Activated CD4-positive, alpha-beta T cell treated with anti-CD3 and anti-CD28 coated beads, Interleukin-2, amount 10 ng/mL, durations not matched to agents 7 days and 5 days (primary cell): ENCODE measurements at regions of chr10 and their contacts with region 1.

Region 1: DNA sequence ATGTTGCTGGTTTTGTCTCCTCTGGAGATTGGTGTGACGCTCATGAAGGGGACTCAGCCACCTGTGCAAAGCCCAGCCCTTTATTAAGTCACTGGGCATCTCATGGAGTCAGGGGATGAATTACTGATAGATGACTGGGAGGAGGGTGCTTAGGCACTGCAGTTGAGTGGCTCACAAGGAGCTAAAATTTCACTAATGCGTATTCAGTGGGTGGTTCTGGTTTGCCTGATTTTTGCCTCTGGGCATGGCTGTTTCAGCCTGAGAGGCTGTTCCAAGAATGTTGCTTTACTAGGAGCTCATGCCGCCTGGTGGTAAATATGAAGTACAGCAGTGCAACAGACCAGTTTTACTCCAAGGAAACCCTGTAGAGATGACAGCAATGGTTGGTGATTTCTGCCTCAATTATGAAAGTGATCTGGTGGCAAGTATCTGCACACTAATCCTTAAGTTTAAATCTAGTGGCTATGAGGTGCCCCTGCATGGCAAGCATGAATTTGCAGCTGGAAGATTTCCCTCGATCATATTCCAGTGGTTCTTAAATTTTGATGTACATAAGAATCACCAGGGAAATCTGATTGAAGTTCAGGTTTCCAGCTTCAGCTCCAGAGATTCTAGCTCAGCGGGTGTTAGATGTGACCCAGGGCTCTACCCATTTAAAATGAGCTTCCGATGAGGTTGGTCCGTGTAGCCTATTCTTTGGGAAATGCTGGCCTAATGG is 19.9 kb downstream of the ACTA2 start:
- DNase-seq: peak; percentile 55
- H3K4me3 Mint-ChIP-seq: no peak overlapping the region
- H3K27ac Mint-ChIP-seq: no peak overlapping the region
- H3K4me1 Mint-ChIP-seq: peaks cover 25% of the 10 kb centered on the region
- H3K27me3 Mint-ChIP-seq: no peaks in the 10 kb centered on the region

Region 2: DNA sequence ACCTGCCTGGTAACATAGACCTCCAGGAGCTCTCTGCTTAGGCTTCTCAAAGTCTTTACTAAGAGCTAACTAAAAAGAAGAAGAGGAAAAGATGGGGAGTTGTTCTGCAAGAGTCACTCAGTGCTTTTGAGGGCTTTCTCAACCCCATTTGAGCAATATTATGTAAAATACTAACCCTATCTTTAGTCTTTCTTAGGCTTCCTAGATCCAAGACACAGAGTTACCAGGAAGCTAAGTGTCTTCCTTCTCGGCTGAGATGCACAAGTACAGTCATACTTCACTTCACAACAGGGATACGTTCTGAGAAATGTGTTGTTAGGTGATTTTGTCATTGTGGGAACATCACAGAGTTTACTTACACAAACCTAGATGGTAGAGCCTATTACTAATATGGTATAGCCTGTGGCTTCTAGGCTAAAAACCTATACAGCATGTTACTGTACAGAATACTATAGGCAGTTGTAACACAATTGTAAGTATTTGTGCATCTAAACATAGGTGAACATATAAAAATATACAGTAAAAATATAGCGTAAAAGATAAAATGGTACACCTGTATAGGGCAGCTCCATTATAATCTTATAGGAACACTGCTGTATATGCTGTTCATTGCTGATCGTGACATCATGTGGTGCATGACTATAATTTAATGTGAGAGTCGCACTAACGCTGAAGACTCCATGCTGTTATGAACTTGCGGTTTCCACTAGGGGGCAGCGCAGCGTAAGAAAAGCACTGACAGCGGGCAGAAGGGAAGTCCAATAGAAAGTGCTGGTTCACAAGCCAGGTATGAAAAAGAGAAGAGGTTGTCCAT is 97.4 kb before region 1 on chr10:
- CTCF ChIA-PET with region 1: interaction called, 57 read pairs
- POLR2A ChIA-PET with region 1: no interaction called
- DNase-seq: peak; percentile 92
- H3K4me3 Mint-ChIP-seq: no peak overlapping the region
- H3K27ac Mint-ChIP-seq: no peak overlapping the region
- H3K4me1 Mint-ChIP-seq: peaks cover 32% of the 10 kb centered on the region
- H3K27me3 Mint-ChIP-seq: no peaks in the 10 kb centered on the region

Region 3: DNA sequence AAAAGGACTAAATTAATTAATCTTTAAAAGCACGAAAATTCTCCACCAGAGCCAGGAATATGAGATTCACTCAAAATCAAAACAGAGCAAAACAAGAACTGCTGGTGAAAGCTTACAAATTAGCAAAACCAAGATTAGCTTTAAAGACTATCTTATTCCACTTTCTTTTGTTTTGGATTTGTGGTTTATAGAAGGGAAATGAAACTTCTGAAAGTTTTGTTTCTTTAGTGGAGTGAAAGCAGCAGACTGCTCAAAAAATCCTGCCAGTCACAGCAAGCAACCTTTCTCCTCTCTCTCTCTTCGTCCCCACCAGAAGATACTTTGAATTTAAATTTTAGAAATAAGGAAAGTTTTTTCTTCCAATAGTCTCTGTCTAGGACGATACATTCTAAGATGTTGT is 12.1 kb after region 1 on chr10:
- CTCF ChIA-PET with region 1: interaction called, 32 read pairs
- POLR2A ChIA-PET with region 1: no interaction called
- DNase-seq: no peak
- H3K4me3 Mint-ChIP-seq: no peak overlapping the region
- H3K27ac Mint-ChIP-seq: no peak overlapping the region
- H3K4me1 Mint-ChIP-seq: peaks cover 17% of the 10 kb centered on the region
- H3K27me3 Mint-ChIP-seq: no peaks in the 10 kb centered on the region

Region 4: DNA sequence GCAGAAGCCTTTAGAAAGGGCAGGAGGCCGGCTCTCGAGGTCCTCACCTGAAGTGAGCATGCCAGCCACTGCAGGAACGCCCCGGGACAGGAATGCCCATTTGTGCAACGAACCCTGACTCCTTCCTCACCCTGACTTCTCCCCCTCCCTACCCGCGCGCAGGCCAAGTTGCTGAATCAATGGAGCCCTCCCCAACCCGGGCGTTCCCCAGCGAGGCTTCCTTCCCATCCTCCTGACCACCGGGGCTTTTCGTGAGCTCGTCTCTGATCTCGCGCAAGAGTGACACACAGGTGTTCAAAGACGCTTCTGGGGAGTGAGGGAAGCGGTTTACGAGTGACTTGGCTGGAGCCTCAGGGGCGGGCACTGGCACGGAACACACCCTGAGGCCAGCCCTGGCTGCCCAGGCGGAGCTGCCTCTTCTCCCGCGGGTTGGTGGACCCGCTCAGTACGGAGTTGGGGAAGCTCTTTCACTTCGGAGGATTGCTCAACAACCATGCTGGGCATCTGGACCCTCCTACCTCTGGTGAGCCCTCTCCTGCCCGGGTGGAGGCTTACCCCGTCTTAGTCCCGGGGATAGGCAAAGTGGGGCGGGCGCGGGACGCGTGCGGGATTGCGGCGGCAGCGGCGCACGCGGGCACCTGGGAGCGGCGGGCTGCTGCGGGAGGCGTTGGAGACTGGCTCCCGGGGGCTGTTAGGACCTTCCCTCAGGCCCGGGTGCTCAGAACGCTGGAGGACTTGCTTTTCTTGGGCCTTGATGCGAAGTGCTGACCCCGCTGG is 57.9 kb after region 1 on chr10 and contains the start of gene FAS:
- CTCF ChIA-PET with region 1: interaction called, 12 read pairs
- POLR2A ChIA-PET with region 1: interaction called, 6 read pairs
- DNase-seq: peak; percentile 85
- H3K4me3 Mint-ChIP-seq: peak within 1 kb of the TSS; percentile 97
- H3K27ac Mint-ChIP-seq: peak within 1 kb of the TSS; percentile 97
- H3K4me1 Mint-ChIP-seq: peaks cover 69% of the 10 kb centered on the region
- H3K27me3 Mint-ChIP-seq: no peaks in the 10 kb centered on the region
- total RNA-seq, gene FAS: 62.3 to 65.1 TPM

Region 5: GRCh38 chr10:89029785-89030437 is 97.2 kb after region 1 on chr10:
- CTCF ChIA-PET with region 1: interaction called, 10 read pairs
- POLR2A ChIA-PET with region 1: no interaction called
- DNase-seq: peak; percentile 81
- H3K4me3 Mint-ChIP-seq: no peak overlapping the region
- H3K27ac Mint-ChIP-seq: no peak overlapping the region
- H3K4me1 Mint-ChIP-seq: peaks cover 16% of the 10 kb centered on the region
- H3K27me3 Mint-ChIP-seq: no peaks in the 10 kb centered on the region

Region 6: DNA sequence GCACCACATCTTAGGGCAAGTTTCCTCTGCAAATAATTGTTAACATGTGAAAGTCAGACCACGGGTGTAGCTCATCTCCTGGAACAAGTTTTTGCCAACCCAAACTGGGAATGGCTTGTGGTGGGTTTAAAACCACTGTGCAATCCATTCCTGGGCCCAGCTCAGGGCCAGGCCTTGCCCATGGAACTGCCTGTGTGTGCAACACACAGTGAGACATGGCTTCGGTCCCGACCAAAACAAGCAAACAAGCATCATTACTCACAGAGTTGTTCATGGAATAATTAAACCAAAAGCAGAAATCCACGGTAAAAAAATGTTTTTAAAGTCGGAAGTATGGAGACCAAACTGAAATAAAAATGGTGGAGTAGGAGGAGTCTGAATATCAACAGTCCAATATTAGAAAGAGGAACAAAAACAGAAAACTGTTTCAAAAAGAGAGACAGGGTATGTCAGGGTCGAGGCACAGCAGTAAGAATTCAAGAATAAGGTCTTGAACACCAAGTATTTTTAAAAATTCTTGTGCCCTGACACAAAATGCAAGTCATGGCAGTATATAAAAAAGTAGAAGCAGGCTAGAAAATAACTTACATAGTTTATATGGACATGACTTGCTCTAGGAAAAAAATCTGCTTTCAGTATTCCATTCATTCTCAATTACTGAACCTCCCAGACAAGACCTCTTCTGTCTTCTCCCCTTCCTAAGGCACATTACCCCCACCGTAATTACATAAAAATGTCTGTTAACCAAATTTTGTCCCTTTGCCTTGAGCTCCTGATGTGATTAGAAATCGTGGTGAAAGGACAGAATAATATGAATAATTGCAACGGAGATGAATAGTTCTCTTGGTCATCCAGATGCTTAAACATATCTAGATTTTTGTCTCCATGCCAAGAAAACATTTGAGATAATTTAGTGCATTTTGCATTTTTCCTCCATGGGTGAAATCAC is 146.3 kb after region 1 on chr10:
- CTCF ChIA-PET with region 1: no interaction called
- POLR2A ChIA-PET with region 1: no interaction called
- DNase-seq: no peak
- H3K4me3 Mint-ChIP-seq: no peak overlapping the region
- H3K27ac Mint-ChIP-seq: no peak overlapping the region
- H3K4me1 Mint-ChIP-seq: peaks cover 25% of the 10 kb centered on the region
- H3K27me3 Mint-ChIP-seq: peaks cover 8% of the 10 kb centered on the region

Region 7: GRCh38 chr10:89102735-89103134 is 170.0 kb after region 1 on chr10:
- CTCF ChIA-PET with region 1: no interaction called
- POLR2A ChIA-PET with region 1: no interaction called
- DNase-seq: no peak
- H3K4me3 Mint-ChIP-seq: no peak overlapping the region
- H3K27ac Mint-ChIP-seq: no peak overlapping the region
- H3K4me1 Mint-ChIP-seq: peaks cover 5% of the 10 kb centered on the region
- H3K27me3 Mint-ChIP-seq: peaks cover 1% of the 10 kb centered on the region

Region 8: DNA sequence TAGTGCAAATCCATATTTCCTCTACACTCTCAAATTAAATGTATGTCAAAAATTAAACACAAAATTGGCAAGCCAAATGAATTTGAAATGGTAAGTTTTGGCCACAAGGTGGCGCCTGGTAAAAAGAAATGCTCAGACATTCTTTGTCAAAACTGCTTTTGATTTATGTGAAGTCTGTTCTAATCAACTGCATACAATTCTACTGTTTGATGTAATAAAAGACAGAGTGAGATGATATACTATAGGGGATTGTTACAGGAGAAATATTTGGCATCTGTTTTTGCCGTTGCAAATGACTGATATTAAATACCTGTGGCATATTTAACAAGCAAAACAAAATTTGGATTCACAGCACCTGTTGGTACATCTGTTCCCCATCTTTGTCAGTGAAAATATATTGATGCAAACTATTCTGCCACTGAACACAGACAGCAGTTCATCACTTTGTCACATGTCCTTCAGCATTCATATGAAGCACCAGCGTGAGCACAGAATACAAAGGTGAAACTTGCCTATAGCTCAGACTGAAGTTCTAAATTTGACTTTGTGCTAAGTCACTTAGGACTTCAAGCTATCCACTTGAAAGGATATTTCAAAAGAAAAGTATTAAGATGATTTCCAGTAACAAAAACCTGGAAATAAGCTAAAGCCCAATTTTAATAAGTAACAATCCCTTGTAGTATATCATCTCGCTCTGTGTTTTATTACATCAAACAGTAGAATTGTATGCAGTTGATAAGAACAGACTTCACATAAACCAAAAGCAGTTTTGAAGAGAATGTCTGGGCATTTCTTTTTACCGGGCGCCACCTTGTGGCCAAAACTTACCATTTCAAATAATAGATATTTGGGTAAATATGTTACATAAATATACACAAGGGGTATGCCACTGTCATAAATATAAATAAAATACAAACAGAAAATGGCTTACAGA is 284.6 kb after region 1 on chr10:
- CTCF ChIA-PET with region 1: interaction called, 12 read pairs
- POLR2A ChIA-PET with region 1: no interaction called
- DNase-seq: peak; percentile 75
- H3K4me3 Mint-ChIP-seq: no peak overlapping the region
- H3K27ac Mint-ChIP-seq: peak overlapping the region; percentile 60
- H3K4me1 Mint-ChIP-seq: peaks cover 14% of the 10 kb centered on the region
- H3K27me3 Mint-ChIP-seq: peaks cover 2% of the 10 kb centered on the region